ENCODE measurements at regions of chr6 and their contacts with region 1.

Region 1: GRCh38 chr6:21593412-21593926 is at the start of gene SOX4:
- DNase-seq: peak; percentile 87 to 97
- ATAC-seq: peak; percentile 79 to 90 (median 87)
- H3K4me3 ChIP-seq: peak within 1 kb of the TSS; percentile 62 to 88 (median 80)
- H3K27ac ChIP-seq: peak within 1 kb of the TSS; percentile 59 to 96 (median 90)
- H3K4me1 ChIP-seq: peaks cover 0 to 39% (median 15%) of the 10 kb centered on the region in 9 donors
- H3K27me3 ChIP-seq: no peaks in the 10 kb centered on the region
- CTCF ChIP-seq: no peak
- total RNA-seq, gene SOX4: 3.1 to 19.1 (median 7.7) TPM

Region 2: GRCh38 chr6:20212392-20213217 is 1380.9 kb before region 1 on chr6 and contains the start of gene MBOAT1:
- intact Hi-C with region 1: loop called in 1 of 10 experiments (anchors 10 kb)
- DNase-seq: peak; percentile 92 to 95
- ATAC-seq: peak; percentile 97 to 100 (median 98)
- H3K4me3 ChIP-seq: peak within 1 kb of the TSS; percentile 68 to 96 (median 87)
- H3K27ac ChIP-seq: peak within 1 kb of the TSS; percentile 66 to 94 (median 91)
- H3K4me1 ChIP-seq: peaks cover 2 to 56% (median 32%) of the 10 kb centered on the region in 9 donors
- H3K27me3 ChIP-seq: no peaks in the 10 kb centered on the region
- CTCF ChIP-seq: peak in 4 of 9 donors; percentile 20 to 53 (median 50)
- total RNA-seq, gene MBOAT1: 1.9 to 7.9 (median 3.9) TPM

Region 3: DNA sequence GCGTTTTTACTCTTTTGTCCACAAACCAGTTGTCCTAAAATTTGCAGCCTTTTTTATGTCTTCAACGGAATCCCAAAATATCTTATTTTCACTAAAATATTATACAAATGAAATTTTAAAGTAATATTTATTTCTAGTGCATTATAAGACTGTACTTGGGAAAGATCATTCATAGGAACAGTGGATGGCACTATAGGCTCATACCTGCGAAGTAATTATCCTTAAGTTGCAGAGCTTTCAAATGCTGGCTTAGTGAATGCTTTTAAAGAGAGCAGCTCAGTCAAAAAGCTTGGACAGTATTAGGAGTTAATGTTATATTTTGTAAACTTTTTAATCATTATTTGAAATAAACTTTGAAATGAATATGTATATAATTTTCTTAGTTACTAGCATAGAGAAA is 804.3 kb before region 1 on chr6:
- intact Hi-C with region 1: loop called in 4 of 10 experiments (anchors 2 to 10 kb)
- DNase-seq: no peak
- ATAC-seq: peak in 3 of 8 donors; percentile 46 to 75 (median 62)
- H3K4me3 ChIP-seq: no peak overlapping the region
- H3K27ac ChIP-seq: no peak overlapping the region
- H3K4me1 ChIP-seq: peaks cover 0 to 8% (median 0%) of the 10 kb centered on the region in 9 donors
- H3K27me3 ChIP-seq: no peaks in the 10 kb centered on the region
- CTCF ChIP-seq: peak in 7 of 9 donors; percentile 9 to 55 (median 30)

Region 4: GRCh38 chr6:21342501-21342900 is 251.0 kb before region 1 on chr6:
- intact Hi-C with region 1: loop called in 2 of 10 experiments (anchors 5 to 10 kb)
- DNase-seq: no peak
- ATAC-seq: peak in 7 of 8 donors; percentile 33 to 95 (median 65)
- H3K4me3 ChIP-seq: no peak overlapping the region
- H3K27ac ChIP-seq: no peak overlapping the region
- H3K4me1 ChIP-seq: no peaks in the 10 kb centered on the region
- H3K27me3 ChIP-seq: no peaks in the 10 kb centered on the region
- CTCF ChIP-seq: no peak

Region 5: GRCh38 chr6:21426832-21427490 is 166.5 kb before region 1 on chr6:
- intact Hi-C with region 1: no loop called
- DNase-seq: no peak
- ATAC-seq: no peak
- H3K4me3 ChIP-seq: no peak overlapping the region
- H3K27ac ChIP-seq: no peak overlapping the region
- H3K4me1 ChIP-seq: no peaks in the 10 kb centered on the region
- H3K27me3 ChIP-seq: no peaks in the 10 kb centered on the region
- CTCF ChIP-seq: no peak

Region 6: DNA sequence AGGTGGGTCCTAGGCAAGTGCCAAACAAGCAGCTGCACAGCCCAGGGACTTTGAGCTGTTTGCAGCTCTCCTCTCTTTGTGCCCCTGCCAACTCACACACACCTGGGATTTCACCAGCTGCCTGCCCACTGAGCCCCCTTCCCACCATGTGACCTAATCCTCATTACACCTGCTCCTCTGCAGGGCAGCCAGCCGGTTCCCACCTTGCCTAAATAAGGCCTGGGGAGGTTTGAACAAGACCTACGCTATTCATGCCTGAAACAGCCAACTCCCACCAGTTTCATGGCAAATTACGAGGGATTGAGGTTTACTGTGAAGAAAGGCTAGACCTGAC is 92.5 kb before region 1 on chr6:
- intact Hi-C with region 1: no loop called
- DNase-seq: no peak
- ATAC-seq: no peak
- H3K4me3 ChIP-seq: no peak overlapping the region
- H3K27ac ChIP-seq: no peak overlapping the region
- H3K4me1 ChIP-seq: peaks cover 0 to 4% (median 0%) of the 10 kb centered on the region in 9 donors
- H3K27me3 ChIP-seq: no peaks in the 10 kb centered on the region
- CTCF ChIP-seq: no peak

Region 7: DNA sequence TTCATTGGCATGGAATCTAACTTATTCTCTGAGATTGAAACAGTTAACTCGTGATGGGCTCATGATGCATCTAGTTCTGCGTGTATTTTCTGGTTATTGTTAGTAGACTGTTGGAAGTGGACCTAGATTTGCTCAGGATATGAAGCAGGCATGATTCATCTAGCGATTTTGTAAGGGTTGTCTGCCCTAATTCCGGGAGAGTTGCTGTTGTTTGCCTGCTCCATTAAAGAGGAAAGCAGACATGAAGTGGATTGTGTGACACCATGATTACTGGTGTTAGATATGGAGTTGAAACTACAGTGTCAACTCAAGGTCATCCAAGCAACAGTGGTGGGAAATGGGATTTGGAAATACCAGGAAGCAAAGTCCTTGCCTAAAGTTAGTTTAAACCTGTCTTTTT is 41.1 kb after region 1 on chr6:
- intact Hi-C with region 1: no loop called
- DNase-seq: no peak
- ATAC-seq: peak in 6 of 8 donors; percentile 24 to 73 (median 54)
- H3K4me3 ChIP-seq: no peak overlapping the region
- H3K27ac ChIP-seq: peak overlapping the region in 3 of 10 donors; percentile 36 to 75 (median 47)
- H3K4me1 ChIP-seq: peaks cover 0 to 12% (median 0%) of the 10 kb centered on the region in 9 donors
- H3K27me3 ChIP-seq: no peaks in the 10 kb centered on the region
- CTCF ChIP-seq: no peak

Region 8: DNA sequence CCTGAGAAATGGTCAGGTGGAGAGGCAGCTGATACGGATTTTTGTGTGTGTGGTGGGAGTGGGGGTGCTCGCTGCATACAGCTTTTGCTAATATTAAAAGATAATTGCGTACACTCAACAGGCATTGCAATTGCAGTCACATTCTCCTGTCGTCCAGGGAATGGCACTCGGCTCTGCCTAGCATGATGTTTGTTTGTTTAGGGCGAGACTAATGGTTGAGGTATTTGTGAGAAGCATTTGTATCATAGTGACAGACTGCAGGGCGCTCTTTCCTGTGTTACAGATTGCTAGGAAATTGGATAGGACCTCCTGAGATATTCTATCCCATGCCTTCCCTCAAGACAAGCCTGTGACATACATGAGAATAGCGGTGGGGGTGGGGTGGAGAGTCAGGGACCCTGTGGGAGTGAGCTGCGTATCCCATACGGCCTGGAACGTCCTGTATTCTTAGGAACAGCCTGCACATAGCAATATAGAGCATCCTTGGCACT is 207.5 kb after region 1 on chr6:
- intact Hi-C with region 1: loop called in 1 of 10 experiments (anchors 5 kb)
- DNase-seq: no peak
- ATAC-seq: peak in 1 of 8 donors; percentile 37
- H3K4me3 ChIP-seq: no peak overlapping the region
- H3K27ac ChIP-seq: peak overlapping the region in 2 of 10 donors; percentile 45 to 74
- H3K4me1 ChIP-seq: peaks cover 0 to 17% (median 11%) of the 10 kb centered on the region in 9 donors
- H3K27me3 ChIP-seq: no peaks in the 10 kb centered on the region
- CTCF ChIP-seq: no peak

Region 9: GRCh38 chr6:21873562-21873961 is 280.1 kb after region 1 on chr6:
- intact Hi-C with region 1: no loop called
- DNase-seq: peak in 1 of 2 donors; percentile 80
- ATAC-seq: peak; percentile 67 to 92 (median 90)
- H3K4me3 ChIP-seq: no peak overlapping the region
- H3K27ac ChIP-seq: peak overlapping the region in 2 of 10 donors; percentile 4 to 12
- H3K4me1 ChIP-seq: peaks cover 0 to 15% (median 10%) of the 10 kb centered on the region in 9 donors
- H3K27me3 ChIP-seq: no peaks in the 10 kb centered on the region
- CTCF ChIP-seq: no peak

Region 10: GRCh38 chr6:22145823-22146677 is 552.6 kb after region 1 on chr6:
- intact Hi-C with region 1: loop called in 8 of 10 experiments (anchors 5 to 10 kb)
- DNase-seq: peak in 1 of 2 donors; percentile 37
- ATAC-seq: peak in 7 of 8 donors; percentile 30 to 48 (median 45)
- H3K4me3 ChIP-seq: peak overlapping the region in 9 of 10 donors; percentile 21 to 45 (median 42)
- H3K27ac ChIP-seq: peak overlapping the region in 2 of 10 donors; percentile 22 to 24
- H3K4me1 ChIP-seq: peaks cover 16 to 85% (median 61%) of the 10 kb centered on the region in 9 donors
- H3K27me3 ChIP-seq: no peaks in the 10 kb centered on the region
- CTCF ChIP-seq: peak in 8 of 9 donors; percentile 20 to 66 (median 36)

Region 11: DNA sequence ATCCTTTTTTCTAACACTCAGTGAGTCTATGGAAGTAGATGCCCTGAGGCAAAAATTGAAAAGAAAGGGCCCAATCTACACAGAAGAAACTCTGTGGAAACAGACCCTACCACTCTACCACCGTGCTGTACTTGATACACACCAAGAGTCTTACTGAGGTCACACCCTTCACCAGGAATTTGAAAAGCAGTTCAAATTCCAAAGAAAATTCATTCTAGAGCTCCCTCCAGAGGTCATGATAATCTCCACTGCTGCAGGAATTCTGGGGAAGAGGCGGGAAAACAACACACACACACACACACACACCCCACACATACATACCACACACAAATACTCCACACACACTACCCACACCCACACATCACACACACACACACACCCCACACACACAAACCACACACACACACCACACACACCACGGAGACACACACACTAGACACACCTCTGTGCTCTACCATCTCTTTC is 1312.7 kb after region 1 on chr6:
- intact Hi-C with region 1: loop called in 1 of 10 experiments (anchors 10 kb)
- DNase-seq: no peak
- ATAC-seq: peak in 6 of 8 donors; percentile 25 to 79 (median 58)
- H3K4me3 ChIP-seq: no peak overlapping the region
- H3K27ac ChIP-seq: no peak overlapping the region
- H3K4me1 ChIP-seq: peaks cover 0 to 5% (median 0%) of the 10 kb centered on the region in 9 donors
- H3K27me3 ChIP-seq: no peaks in the 10 kb centered on the region
- CTCF ChIP-seq: peak in 7 of 9 donors; percentile 24 to 55 (median 45)

Measured in heart right ventricle (tissue), 16 donors.